GM12878 (cell line): ENCODE measurements at regions of chr15 and their contacts with region 1.

Region 1: GRCh38 chr15:65373163-65373651 is 4.6 kb downstream of the IGDCC3 start:
- DNase-seq: no peak
- ATAC-seq: no peak
- H3K4me3 ChIP-seq: no peak overlapping the region
- H3K27ac ChIP-seq: no peak overlapping the region
- H3K4me1 ChIP-seq: no peaks in the 10 kb centered on the region
- H3K27me3 ChIP-seq: peaks cover 19 to 20% of the 10 kb centered on the region in 2 experiments
- CTCF ChIP-seq: no peak
- EP300 ChIP-seq: no peak
- POLR2A ChIP-seq: no peak
- RAD21 ChIP-seq: no peak

Region 2: DNA sequence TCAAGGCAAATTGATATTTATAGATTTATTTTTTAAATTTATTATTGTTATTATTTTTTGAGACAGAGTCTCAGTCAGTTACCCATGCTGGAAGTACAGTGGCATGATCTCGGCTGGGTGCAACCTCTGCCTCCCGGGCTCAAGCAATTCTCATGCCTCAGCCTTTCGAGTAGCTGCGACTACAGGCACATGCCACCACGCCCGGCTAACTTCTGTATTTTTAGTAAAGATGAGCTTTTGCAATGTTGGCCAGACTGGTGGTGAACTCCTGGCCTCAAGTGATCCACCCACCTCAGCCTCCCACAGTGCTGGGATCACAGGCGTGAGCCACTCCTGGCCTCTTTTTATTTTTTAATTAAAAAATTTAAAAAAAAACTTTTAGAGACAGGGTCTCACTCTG is 402.5 kb before region 1 on chr15:
- CTCF ChIA-PET with region 1: no interaction called
- POLR2A ChIA-PET with region 1: no interaction called
- RAD21 ChIA-PET with region 1: no interaction called
- SMC1A ChIA-PET with region 1: no interaction called
- in situ Hi-C with region 1: no loop called
- intact Hi-C with region 1: no loop called
- DNase-seq: no peak
- ATAC-seq: no peak
- H3K4me3 ChIP-seq: no peak overlapping the region
- H3K27ac ChIP-seq: no peak overlapping the region
- H3K4me1 ChIP-seq: no peaks in the 10 kb centered on the region
- H3K27me3 ChIP-seq: no peaks in the 10 kb centered on the region
- CTCF ChIP-seq: no peak
- EP300 ChIP-seq: no peak
- POLR2A ChIP-seq: no peak
- RAD21 ChIP-seq: no peak

Region 3: DNA sequence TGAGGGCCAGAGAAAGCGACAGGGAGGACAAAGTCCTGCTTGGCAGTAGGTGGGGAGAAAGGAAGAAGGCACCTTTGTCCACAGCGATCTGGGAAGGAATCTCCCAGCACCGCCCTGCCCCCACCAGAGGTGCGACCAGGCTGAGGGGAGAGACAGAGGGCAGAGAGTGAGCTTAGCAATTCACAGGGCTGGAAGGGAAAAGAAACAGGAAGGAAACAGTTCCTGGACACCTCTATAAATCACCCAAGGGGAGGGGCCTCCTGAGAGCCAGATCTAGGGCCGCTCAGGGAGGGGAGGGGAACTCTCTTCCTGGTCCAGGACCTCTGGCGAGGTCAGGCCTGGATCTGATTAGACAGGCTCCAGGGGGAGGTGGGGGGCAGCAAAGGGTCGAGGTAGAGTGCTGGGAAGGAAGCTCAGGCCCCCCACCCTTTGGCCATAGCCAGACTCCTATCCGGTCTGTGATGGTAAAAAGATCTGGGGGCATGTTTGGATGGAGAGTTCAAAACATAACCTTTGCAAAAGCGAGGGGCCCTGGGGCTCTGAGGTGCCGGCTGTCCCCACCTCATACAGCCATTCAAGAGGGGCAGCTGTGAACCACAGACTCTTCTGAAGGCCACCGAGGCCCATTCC is 33.2 kb before region 1 on chr15:
- CTCF ChIA-PET with region 1: no interaction called
- POLR2A ChIA-PET with region 1: no interaction called
- RAD21 ChIA-PET with region 1: no interaction called
- SMC1A ChIA-PET with region 1: no interaction called
- in situ Hi-C with region 1: no loop called
- intact Hi-C with region 1: no loop called
- DNase-seq: no peak
- ATAC-seq: no peak
- H3K4me3 ChIP-seq: no peak overlapping the region
- H3K27ac ChIP-seq: no peak overlapping the region
- H3K4me1 ChIP-seq: peaks cover 6% of the 10 kb centered on the region
- H3K27me3 ChIP-seq: peaks cover 2 to 4% of the 10 kb centered on the region in 2 experiments; a peak in 3 of 4 replicates
- CTCF ChIP-seq: no peak
- EP300 ChIP-seq: no peak
- POLR2A ChIP-seq: no peak
- RAD21 ChIP-seq: no peak

Region 4: DNA sequence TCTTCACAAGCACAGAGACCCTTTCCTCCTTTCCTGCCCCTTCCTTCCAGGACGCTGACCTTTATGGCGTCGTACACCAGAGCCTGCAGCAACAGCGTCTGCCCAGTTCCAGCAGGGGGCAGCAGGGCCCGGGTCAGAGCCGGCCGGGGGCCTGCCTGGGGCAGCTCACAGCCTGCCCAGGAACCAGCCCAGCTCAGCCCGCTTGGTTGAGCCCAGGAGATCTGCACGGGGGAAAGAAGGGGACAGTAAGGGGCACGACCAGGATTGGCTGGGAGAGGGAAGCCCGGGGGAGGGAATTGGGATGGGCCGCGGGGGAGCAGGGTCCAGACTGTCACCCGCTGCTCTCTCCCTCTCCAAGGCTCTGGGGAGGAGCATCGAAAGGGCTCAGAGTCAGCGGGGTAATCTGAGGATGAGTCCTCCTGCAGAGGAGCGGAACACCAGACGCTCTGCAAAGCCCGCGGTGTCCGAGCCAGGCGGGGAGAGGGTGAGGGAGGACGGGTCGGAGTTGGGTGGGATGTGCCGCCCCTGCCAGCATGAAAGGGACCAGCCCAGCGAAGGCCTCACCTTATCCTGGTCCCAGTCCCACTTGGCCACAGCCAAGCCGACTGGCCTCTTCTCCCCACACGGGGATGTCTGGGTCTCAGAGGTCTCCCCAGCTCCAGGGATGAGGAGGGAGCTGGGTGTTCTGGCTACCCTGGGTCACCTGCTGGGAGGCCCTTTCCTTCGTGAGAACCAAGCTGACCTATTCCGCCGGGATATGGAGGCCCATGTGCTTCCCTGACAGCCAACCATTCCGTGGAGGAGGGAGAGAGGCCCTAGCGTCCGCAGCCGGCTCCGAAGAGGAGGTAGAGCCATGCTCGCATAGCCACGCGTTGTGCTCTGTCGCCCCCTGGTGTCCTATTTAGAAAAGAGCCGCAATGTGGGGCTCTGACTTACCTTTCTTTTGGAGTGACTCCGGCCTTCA is 12.0 kb after region 1 on chr15:
- CTCF ChIA-PET with region 1: interaction called, 10 read pairs
- POLR2A ChIA-PET with region 1: interaction called, 3 read pairs
- RAD21 ChIA-PET with region 1: no interaction called
- SMC1A ChIA-PET with region 1: interaction called, 3 read pairs
- in situ Hi-C with region 1: no loop called
- intact Hi-C with region 1: no loop called
- DNase-seq: no peak
- ATAC-seq: peak; percentile 96
- H3K4me3 ChIP-seq: no peak overlapping the region
- H3K27ac ChIP-seq: no peak overlapping the region
- H3K4me1 ChIP-seq: peaks cover 7% of the 10 kb centered on the region
- H3K27me3 ChIP-seq: peaks cover 1 to 3% of the 10 kb centered on the region in 2 experiments; a peak in 3 of 4 replicates
- CTCF ChIP-seq: peak; percentile 87 to 95 (median 89)
- EP300 ChIP-seq: no peak
- POLR2A ChIP-seq: no peak
- RAD21 ChIP-seq: peak; percentile 86

Region 5: DNA sequence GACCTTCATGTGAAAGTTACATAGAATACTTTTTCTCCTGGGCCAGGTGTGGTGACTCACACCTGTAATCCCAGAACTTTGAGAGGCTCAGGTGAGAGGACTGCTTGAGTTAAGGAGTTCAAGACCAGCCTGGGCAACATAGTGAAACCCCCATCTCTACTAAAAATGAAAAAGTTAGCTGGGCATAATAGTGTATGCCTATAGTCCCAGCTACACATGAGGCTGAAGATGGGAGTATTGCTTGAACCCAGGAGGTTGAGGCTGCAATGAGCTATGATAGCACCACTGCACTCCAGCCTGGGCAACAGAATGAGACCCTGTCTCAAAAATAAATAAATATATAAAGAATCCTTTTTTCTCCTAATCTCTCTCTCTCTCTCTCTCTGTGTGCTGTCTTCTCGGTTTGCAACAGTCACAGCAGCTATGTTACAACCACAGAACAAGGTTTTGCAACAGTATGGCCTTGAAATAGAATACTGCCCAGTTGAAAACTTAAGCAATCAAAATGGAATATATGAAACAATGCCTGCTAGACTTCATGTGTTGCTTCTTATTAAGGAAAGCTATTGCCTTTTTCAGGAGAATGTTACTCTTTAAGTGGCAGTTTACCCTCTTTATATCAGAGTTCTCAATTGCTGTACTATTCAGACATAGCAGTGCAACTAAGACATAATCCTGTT is 431.2 kb after region 1 on chr15:
- CTCF ChIA-PET with region 1: no interaction called
- POLR2A ChIA-PET with region 1: no interaction called
- RAD21 ChIA-PET with region 1: no interaction called
- SMC1A ChIA-PET with region 1: no interaction called
- in situ Hi-C with region 1: no loop called
- intact Hi-C with region 1: no loop called
- DNase-seq: no peak
- ATAC-seq: peak; percentile 40
- H3K4me3 ChIP-seq: no peak overlapping the region
- H3K27ac ChIP-seq: peak overlapping the region; percentile 10; the same call in 1 of the 2 replicates
- H3K4me1 ChIP-seq: peaks cover 27% of the 10 kb centered on the region
- H3K27me3 ChIP-seq: no peaks in the 10 kb centered on the region
- CTCF ChIP-seq: no peak
- EP300 ChIP-seq: no peak
- POLR2A ChIP-seq: no peak
- RAD21 ChIP-seq: no peak